CD8-positive, alpha-beta T cell (primary cell): ENCODE measurements at regions of chr6 and their contacts with region 1.

Region 1: GRCh38 chr6:90478789-90479602 is 107.9 kb downstream of the MAP3K7 start:
- DNase-seq: peak; percentile 51 to 91 (median 81)
- ATAC-seq: peak; percentile 99
- H3K4me3 ChIP-seq: no peak overlapping the region
- H3K4me3 Mint-ChIP-seq: no peak overlapping the region
- H3K27ac ChIP-seq: no peak overlapping the region
- H3K27ac Mint-ChIP-seq: peak overlapping the region; percentile 10
- H3K4me1 ChIP-seq: peaks cover 11% of the 10 kb centered on the region
- H3K4me1 Mint-ChIP-seq: peaks cover 19% of the 10 kb centered on the region
- H3K27me3 ChIP-seq: no peaks in the 10 kb centered on the region
- H3K27me3 Mint-ChIP-seq: no peaks in the 10 kb centered on the region
- CTCF ChIP-seq: peak; percentile 88

Region 2: GRCh38 chr6:89776583-89777233 is 702.3 kb before region 1 on chr6:
- CTCF ChIA-PET with region 1: no interaction called
- POLR2A ChIA-PET with region 1: no interaction called
- intact Hi-C with region 1: loop called in 1 of 2 experiments (anchors 10 kb)
- DNase-seq: no peak
- ATAC-seq: no peak
- H3K4me3 ChIP-seq: no peak overlapping the region
- H3K4me3 Mint-ChIP-seq: no peak overlapping the region
- H3K27ac ChIP-seq: no peak overlapping the region
- H3K27ac Mint-ChIP-seq: no peak overlapping the region
- H3K4me1 ChIP-seq: no peaks in the 10 kb centered on the region
- H3K4me1 Mint-ChIP-seq: no peaks in the 10 kb centered on the region
- H3K27me3 ChIP-seq: no peaks in the 10 kb centered on the region
- H3K27me3 Mint-ChIP-seq: no peaks in the 10 kb centered on the region
- CTCF ChIP-seq: no peak

Region 3: DNA sequence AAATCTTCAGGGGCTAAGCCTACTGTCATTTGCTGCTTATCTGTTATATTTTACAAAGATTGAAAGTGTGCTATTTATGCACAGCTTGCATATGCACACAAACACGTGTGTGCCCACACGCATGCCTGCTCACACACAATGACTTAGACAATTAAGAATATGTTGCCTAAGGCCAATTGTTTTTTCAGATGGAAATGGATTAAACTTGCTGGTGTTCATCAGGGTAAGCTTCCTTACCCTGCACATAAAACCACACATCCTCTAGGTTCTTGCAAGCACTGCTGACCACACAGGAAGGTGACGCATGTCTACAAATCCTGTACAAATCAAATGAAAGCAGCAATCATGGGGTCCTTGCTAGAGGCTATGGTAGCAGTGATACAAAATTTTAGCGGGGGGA is 526.3 kb before region 1 on chr6:
- CTCF ChIA-PET with region 1: interaction called, 21 read pairs
- POLR2A ChIA-PET with region 1: interaction called, 4 read pairs
- intact Hi-C with region 1: no loop called
- DNase-seq: peak; percentile 36 to 92 (median 65)
- ATAC-seq: peak; percentile 84
- H3K4me3 ChIP-seq: no peak overlapping the region
- H3K4me3 Mint-ChIP-seq: peak overlapping the region; percentile 71
- H3K27ac ChIP-seq: peak overlapping the region; percentile 24 to 47
- H3K27ac Mint-ChIP-seq: peak overlapping the region; percentile 94
- H3K4me1 ChIP-seq: peaks cover 55% of the 10 kb centered on the region
- H3K4me1 Mint-ChIP-seq: peaks cover 70% of the 10 kb centered on the region
- H3K27me3 ChIP-seq: no peaks in the 10 kb centered on the region
- H3K27me3 Mint-ChIP-seq: no peaks in the 10 kb centered on the region
- CTCF ChIP-seq: no peak

Region 4: GRCh38 chr6:90039911-90040310 is 439.1 kb before region 1 on chr6:
- CTCF ChIA-PET with region 1: no interaction called
- POLR2A ChIA-PET with region 1: no interaction called
- intact Hi-C with region 1: no loop called
- DNase-seq: no peak
- ATAC-seq: no peak
- H3K4me3 ChIP-seq: no peak overlapping the region
- H3K4me3 Mint-ChIP-seq: no peak overlapping the region
- H3K27ac ChIP-seq: no peak overlapping the region
- H3K27ac Mint-ChIP-seq: peak overlapping the region; percentile 13
- H3K4me1 ChIP-seq: peaks cover 33% of the 10 kb centered on the region
- H3K4me1 Mint-ChIP-seq: peaks cover 44% of the 10 kb centered on the region
- H3K27me3 ChIP-seq: no peaks in the 10 kb centered on the region
- H3K27me3 Mint-ChIP-seq: no peaks in the 10 kb centered on the region
- CTCF ChIP-seq: no peak

Region 5: DNA sequence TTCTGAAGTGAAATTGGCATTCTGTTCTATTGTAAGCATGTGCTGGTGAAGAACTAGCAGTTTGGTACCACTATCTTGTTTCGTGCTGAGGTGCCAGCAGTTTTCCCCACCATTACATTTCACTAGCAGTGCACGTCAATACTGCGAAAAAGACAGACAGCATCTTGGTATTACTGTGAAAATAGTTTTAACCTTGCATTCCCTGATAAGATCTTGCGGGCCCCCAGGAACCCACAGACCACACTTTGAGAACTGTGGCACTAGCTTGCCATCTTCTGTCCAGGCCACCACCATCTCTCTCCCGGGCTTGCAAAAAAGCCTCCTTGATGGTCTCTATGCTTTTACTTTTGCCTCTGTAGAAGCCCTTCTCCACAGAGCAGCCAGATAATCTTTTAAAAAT is 368.0 kb before region 1 on chr6:
- CTCF ChIA-PET with region 1: interaction called, 3 read pairs
- POLR2A ChIA-PET with region 1: no interaction called
- intact Hi-C with region 1: loop called (anchors 2 to 10 kb)
- DNase-seq: peak; percentile 34 to 88 (median 68)
- ATAC-seq: peak; percentile 85
- H3K4me3 ChIP-seq: no peak overlapping the region
- H3K4me3 Mint-ChIP-seq: peak overlapping the region; percentile 42
- H3K27ac ChIP-seq: peak overlapping the region in 1 of 2 experiments; percentile 42
- H3K27ac Mint-ChIP-seq: peak overlapping the region; percentile 86
- H3K4me1 ChIP-seq: peaks cover 53% of the 10 kb centered on the region
- H3K4me1 Mint-ChIP-seq: peaks cover 68% of the 10 kb centered on the region
- H3K27me3 ChIP-seq: no peaks in the 10 kb centered on the region
- H3K27me3 Mint-ChIP-seq: no peaks in the 10 kb centered on the region
- CTCF ChIP-seq: no peak

Region 6: GRCh38 chr6:90263633-90264032 is 215.4 kb before region 1 on chr6:
- CTCF ChIA-PET with region 1: no interaction called
- POLR2A ChIA-PET with region 1: no interaction called
- intact Hi-C with region 1: no loop called
- DNase-seq: no peak
- ATAC-seq: no peak
- H3K4me3 ChIP-seq: no peak overlapping the region
- H3K4me3 Mint-ChIP-seq: no peak overlapping the region
- H3K27ac ChIP-seq: peak overlapping the region in 1 of 2 experiments; percentile 2
- H3K27ac Mint-ChIP-seq: peak overlapping the region; percentile 85
- H3K4me1 ChIP-seq: peaks cover 73% of the 10 kb centered on the region
- H3K4me1 Mint-ChIP-seq: peaks cover 93% of the 10 kb centered on the region
- H3K27me3 ChIP-seq: no peaks in the 10 kb centered on the region
- H3K27me3 Mint-ChIP-seq: no peaks in the 10 kb centered on the region
- CTCF ChIP-seq: no peak

Region 7: DNA sequence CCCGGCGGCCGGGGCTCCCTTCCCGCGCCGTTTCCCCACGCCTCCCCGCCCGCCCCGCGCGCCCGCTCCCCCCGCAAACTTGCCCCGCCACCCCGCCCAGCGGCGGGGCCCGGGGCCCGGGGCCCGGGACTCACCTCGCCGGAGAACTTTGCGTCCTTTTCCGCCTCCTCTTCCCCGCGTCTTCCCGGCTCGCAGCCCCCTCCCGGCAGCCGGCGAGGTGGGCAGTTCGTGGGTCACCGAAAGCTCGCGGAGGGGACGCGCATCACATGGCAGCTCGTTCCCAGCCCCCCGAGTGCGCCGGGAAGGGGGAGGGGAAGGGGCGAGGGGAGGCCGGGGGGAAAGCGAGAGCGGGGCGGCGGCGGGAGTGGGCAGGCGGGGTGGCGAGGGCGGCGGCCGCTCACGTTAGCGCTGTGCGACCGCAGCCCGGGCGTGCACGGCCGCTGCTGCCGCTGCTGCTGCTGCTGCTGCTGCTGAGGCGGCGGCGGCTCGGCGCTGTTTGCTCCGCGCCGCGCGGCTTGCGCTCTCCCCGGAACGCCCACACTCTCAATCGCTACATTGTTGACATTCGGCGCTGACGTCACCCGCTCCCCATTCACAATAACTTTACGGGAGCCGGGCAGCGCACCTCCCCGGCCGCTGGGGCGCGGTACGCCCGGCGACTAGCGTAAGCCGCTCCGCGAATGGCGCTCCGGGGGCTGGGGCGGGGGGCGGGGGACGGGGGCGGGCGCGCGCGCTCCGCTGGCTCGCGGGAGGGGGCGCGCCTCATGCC is 182.5 kb before region 1 on chr6 and contains the start of gene BACH2:
- CTCF ChIA-PET with region 1: interaction called, 18 read pairs
- POLR2A ChIA-PET with region 1: no interaction called
- intact Hi-C with region 1: loop called in 1 of 2 experiments (anchors 1 kb)
- DNase-seq: peak; percentile 87 to 97 (median 96)
- ATAC-seq: peak; percentile 74
- H3K4me3 ChIP-seq: peak within 1 kb of the TSS; percentile 69 to 71
- H3K4me3 Mint-ChIP-seq: peak within 1 kb of the TSS; percentile 94
- H3K27ac ChIP-seq: peak within 1 kb of the TSS; percentile 59 to 88
- H3K27ac Mint-ChIP-seq: peak within 1 kb of the TSS; percentile 94
- H3K4me1 ChIP-seq: peaks cover 27% of the 10 kb centered on the region
- H3K4me1 Mint-ChIP-seq: peaks cover 38% of the 10 kb centered on the region
- H3K27me3 ChIP-seq: no peaks in the 10 kb centered on the region
- H3K27me3 Mint-ChIP-seq: no peaks in the 10 kb centered on the region
- CTCF ChIP-seq: no peak
- total RNA-seq, gene BACH2: 162 to 164 TPM

Region 8: DNA sequence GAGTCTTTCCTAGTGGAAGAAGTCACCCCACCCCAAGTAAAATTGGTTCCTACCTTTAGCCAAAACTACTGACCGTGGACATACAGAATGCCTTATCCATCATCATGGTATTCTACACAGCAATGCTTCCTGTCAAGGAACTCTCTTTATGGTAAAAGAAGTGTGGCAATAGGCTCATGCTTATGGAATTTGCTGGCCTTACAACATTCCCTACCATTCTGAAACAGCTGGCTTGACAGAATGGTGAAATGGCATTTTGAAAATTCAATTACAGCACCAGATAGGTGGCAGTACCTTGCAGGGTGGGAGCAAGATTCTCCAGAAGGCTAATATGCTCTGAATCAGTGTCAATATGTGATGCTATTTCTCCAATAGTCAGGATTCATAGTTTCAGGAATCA is 140.6 kb before region 1 on chr6:
- CTCF ChIA-PET with region 1: no interaction called
- POLR2A ChIA-PET with region 1: no interaction called
- intact Hi-C with region 1: no loop called
- DNase-seq: no peak
- ATAC-seq: no peak
- H3K4me3 ChIP-seq: no peak overlapping the region
- H3K4me3 Mint-ChIP-seq: no peak overlapping the region
- H3K27ac ChIP-seq: no peak overlapping the region
- H3K27ac Mint-ChIP-seq: no peak overlapping the region
- H3K4me1 ChIP-seq: no peaks in the 10 kb centered on the region
- H3K4me1 Mint-ChIP-seq: no peaks in the 10 kb centered on the region
- H3K27me3 ChIP-seq: no peaks in the 10 kb centered on the region
- H3K27me3 Mint-ChIP-seq: no peaks in the 10 kb centered on the region
- CTCF ChIP-seq: no peak

Region 9: DNA sequence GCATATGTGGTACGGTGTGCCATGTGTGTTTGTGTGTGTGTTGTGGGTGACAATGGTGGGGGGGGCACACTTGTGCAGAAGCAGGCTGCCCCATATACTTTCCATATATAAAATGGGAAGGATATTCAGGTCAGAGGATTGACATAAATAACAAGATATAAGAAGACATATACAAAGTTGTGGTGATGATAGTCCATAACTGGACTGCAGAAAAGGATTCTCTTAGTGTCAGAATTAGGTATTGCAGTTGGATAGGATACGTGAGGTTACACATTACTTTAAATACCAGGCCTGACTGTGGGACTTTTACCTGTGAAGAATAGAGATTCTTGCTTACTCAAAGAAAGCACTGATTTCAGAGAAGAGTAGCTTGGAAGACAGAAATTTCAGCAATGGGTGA is 1680.0 kb after region 1 on chr6:
- CTCF ChIA-PET with region 1: no interaction called
- POLR2A ChIA-PET with region 1: no interaction called
- intact Hi-C with region 1: no loop called
- DNase-seq: no peak
- ATAC-seq: no peak
- H3K4me3 ChIP-seq: no peak overlapping the region
- H3K4me3 Mint-ChIP-seq: no peak overlapping the region
- H3K27ac ChIP-seq: no peak overlapping the region
- H3K27ac Mint-ChIP-seq: no peak overlapping the region
- H3K4me1 ChIP-seq: no peaks in the 10 kb centered on the region
- H3K4me1 Mint-ChIP-seq: no peaks in the 10 kb centered on the region
- H3K27me3 ChIP-seq: no peaks in the 10 kb centered on the region
- H3K27me3 Mint-ChIP-seq: no peaks in the 10 kb centered on the region
- CTCF ChIP-seq: no peak